Right ventricle myocardium superior (tissue), 1 donor: ENCODE measurements at regions of chr7 and their contacts with region 1.

Region 1: DNA sequence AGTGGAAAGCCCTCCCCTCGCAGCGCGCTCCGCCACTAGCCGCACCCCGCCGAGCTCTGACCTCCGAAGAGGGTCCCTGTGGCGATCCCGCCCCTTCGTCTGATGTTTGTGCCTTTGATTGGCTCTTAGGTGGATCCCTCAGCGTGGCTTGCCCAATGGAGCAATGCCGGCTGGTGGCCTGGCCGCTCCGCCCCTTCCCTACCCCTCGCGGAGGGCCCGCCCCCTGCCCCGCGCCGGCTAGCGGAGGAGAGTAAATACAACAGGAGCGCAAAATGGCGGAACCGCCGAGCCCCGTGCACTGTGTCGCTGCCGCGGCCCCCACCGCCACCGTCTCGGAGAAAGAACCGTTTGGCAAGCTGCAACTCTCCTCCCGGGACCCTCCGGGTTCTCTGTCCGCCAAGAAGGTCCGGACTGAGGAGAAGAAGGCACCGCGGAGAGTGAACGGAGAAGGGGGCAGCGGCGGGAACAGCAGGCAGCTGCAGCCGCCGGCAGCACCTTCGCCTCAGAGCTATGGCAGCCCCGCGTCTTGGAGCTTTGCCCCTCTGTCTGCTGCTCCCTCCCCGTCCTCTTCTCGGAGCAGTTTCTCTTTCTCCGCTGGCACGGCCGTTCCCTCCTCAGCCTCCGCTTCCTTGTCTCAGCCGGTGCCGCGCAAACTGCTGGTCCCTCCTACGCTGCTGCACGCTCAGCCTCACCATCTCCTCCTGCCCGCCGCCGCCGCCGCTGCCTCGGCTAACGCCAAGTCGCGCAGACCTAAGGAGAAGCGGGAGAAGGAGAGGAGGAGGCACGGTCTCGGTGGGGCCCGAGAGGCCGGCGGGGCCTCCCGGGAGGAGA is at the start of gene RSBN1L:
- DNase-seq: peak; percentile 99
- ATAC-seq: peak; percentile 98
- total RNA-seq, gene RSBN1L: 9.3 TPM

Region 2: DNA sequence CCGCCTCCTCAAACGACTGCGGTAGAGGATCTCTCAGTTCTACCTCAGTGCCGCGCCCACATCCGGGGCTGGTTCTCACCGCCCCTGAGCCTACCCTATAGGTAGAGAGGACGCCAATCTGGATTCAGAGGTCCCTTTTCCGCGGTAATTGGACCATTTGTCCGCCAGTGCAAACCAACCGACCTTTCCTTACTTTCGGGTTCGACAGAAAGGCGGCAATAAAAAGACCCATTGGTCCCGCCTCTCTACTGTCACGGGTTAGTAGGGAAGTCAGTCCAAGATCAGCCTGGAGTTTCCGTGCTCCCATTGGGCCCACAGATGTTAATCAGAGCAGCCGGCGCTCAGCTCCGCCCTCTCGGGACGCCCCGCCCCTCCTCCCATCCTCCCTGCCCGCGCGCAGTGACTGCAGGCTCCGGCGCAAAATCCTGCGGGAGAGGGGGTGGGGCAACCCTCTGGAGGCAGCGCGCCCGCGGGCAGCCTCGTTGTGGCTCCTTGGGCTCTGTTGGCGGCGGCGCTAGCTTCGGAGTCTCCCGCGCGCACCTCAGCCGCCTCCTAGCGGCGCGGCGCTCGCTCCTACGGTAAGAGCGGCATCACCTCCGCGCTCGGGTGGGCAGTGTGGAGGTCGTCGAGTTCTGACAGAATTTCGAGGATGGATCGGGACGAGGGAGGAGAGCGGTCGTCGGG is 102.1 kb after region 1 on chr7 and contains the starts of genes PHTF2 and TMEM60:
- intact Hi-C with region 1: loop called (anchors 2 kb)
- DNase-seq: peak; percentile 99
- ATAC-seq: peak; percentile 96
- total RNA-seq, gene PHTF2: 17.6 TPM
- total RNA-seq, gene TMEM60: 6.6 TPM